ENCODE measurements at regions of chr12 and their contacts with region 1.

Region 1: GRCh38 chr12:53321074-53321814 is at the start of gene AAAS:
- DNase-seq: peak; percentile 84 to 95 (median 91)
- ATAC-seq: peak; percentile 79 to 83 (median 82)
- H3K4me3 ChIP-seq: peak within 1 kb of the TSS; percentile 80 to 95
- H3K4me3 Mint-ChIP-seq: peak within 1 kb of the TSS; percentile 95 to 97 (median 96)
- H3K27ac ChIP-seq: peak within 1 kb of the TSS; percentile 66
- H3K27ac Mint-ChIP-seq: peak within 1 kb of the TSS; percentile 97 to 98
- H3K4me1 ChIP-seq: peaks cover 23 to 52% of the 10 kb centered on the region in 2 experiments
- H3K4me1 Mint-ChIP-seq: peaks cover 40 to 49% (median 42%) of the 10 kb centered on the region in 3 donors
- H3K27me3 ChIP-seq: no peaks in the 10 kb centered on the region
- H3K27me3 Mint-ChIP-seq: no peaks in the 10 kb centered on the region
- total RNA-seq, gene AAAS: 39.3 to 74.6 (median 66.2) TPM

Region 2: GRCh38 chr12:53213348-53213747 is 107.9 kb before region 1 on chr12:
- CTCF ChIA-PET with region 1: interaction called, 5 to 23 read pairs
- POLR2A ChIA-PET with region 1: interaction called in 1 of 2 experiments, 7 read pairs
- DNase-seq: peak; percentile 57 to 91 (median 78)
- ATAC-seq: peak; percentile 65 to 82 (median 67)
- H3K4me3 ChIP-seq: no peak overlapping the region
- H3K4me3 Mint-ChIP-seq: no peak overlapping the region
- H3K27ac ChIP-seq: peak overlapping the region; percentile 20
- H3K27ac Mint-ChIP-seq: peak overlapping the region; percentile 64 to 78
- H3K4me1 ChIP-seq: peaks cover 31 to 87% of the 10 kb centered on the region in 2 experiments
- H3K4me1 Mint-ChIP-seq: peaks cover 78 to 81% (median 79%) of the 10 kb centered on the region in 3 donors
- H3K27me3 ChIP-seq: no peaks in the 10 kb centered on the region
- H3K27me3 Mint-ChIP-seq: no peaks in the 10 kb centered on the region

Region 3: GRCh38 chr12:53344824-53345485 is 23.7 kb after region 1 on chr12:
- CTCF ChIA-PET with region 1: interaction called, 4 to 26 read pairs
- POLR2A ChIA-PET with region 1: no interaction called
- DNase-seq: peak; percentile 27 to 82 (median 56)
- ATAC-seq: peak; percentile 74 to 84 (median 84)
- H3K4me3 ChIP-seq: peak overlapping the region; percentile 55 to 61
- H3K4me3 Mint-ChIP-seq: peak overlapping the region; percentile 91 to 97 (median 91)
- H3K27ac ChIP-seq: peak overlapping the region; percentile 28
- H3K27ac Mint-ChIP-seq: peak overlapping the region; percentile 87 to 92
- H3K4me1 ChIP-seq: peaks cover 6 to 15% of the 10 kb centered on the region in 2 experiments
- H3K4me1 Mint-ChIP-seq: peaks cover 19 to 21% (median 20%) of the 10 kb centered on the region in 3 donors
- H3K27me3 ChIP-seq: peaks cover 0 to 5% of the 10 kb centered on the region in 2 experiments
- H3K27me3 Mint-ChIP-seq: peaks cover 0 to 3% of the 10 kb centered on the region in 2 donors

Region 4: DNA sequence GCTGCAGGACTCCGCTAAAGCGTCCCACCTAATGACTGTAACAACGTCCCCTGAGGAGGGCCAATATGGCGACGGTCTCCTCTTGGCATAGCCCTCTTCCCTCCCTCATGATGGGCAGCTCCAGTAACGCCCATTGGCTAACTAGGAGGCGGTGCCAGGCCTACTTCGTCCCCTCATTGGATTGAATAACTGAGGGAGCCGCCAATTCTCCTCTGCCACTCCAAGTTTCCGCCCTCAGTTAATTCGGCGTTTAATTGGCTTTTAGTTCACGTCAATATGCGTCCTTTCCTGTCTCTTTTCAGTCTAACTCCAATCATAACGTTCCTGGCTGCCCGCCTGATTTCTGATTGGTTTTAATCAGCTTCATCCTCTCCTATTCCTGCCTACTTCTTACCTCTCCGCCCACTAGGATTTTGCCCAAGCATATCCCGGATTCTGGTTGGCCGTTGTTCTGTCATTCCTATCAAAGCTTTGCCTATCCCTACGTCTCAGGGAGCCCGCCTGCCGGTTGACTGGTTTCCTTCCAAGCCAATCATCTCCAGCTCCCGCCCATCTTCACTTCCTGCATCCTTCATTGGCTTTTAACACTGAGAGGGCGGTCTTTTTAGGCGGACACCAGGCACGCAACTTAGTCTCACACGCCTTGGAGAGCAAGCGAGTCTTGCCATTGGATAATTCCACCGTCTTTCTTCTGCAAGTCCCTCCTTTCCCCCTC is 58.3 kb after region 1 on chr12:
- CTCF ChIA-PET with region 1: interaction called, 6 to 31 read pairs
- POLR2A ChIA-PET with region 1: no interaction called
- DNase-seq: peak in 34 of 35 experiments; percentile 76 to 100 (median 98)
- ATAC-seq: peak; percentile 75 to 79 (median 76)
- H3K4me3 ChIP-seq: peak overlapping the region; percentile 51 to 65
- H3K4me3 Mint-ChIP-seq: no peak overlapping the region
- H3K27ac ChIP-seq: peak overlapping the region; percentile 64
- H3K27ac Mint-ChIP-seq: no peak overlapping the region
- H3K4me1 ChIP-seq: peaks cover 31 to 51% of the 10 kb centered on the region in 2 experiments
- H3K4me1 Mint-ChIP-seq: peaks cover 32 to 45% (median 38%) of the 10 kb centered on the region in 3 donors
- H3K27me3 ChIP-seq: no peaks in the 10 kb centered on the region
- H3K27me3 Mint-ChIP-seq: no peaks in the 10 kb centered on the region

Region 5: GRCh38 chr12:53500776-53501614 is 179.8 kb after region 1 on chr12 and contains the start of gene TARBP2:
- CTCF ChIA-PET with region 1: interaction called in 1 of 2 experiments, 10 read pairs
- POLR2A ChIA-PET with region 1: interaction called in 1 of 2 experiments, 3 read pairs
- DNase-seq: peak; percentile 92 to 100 (median 97)
- ATAC-seq: peak; percentile 80 to 82 (median 81)
- H3K4me3 ChIP-seq: peak within 1 kb of the TSS; percentile 80 to 83
- H3K4me3 Mint-ChIP-seq: peak within 1 kb of the TSS; percentile 85 to 97 (median 94)
- H3K27ac ChIP-seq: peak within 1 kb of the TSS; percentile 92
- H3K27ac Mint-ChIP-seq: peak within 1 kb of the TSS; percentile 99
- H3K4me1 ChIP-seq: peaks cover 19 to 34% of the 10 kb centered on the region in 2 experiments
- H3K4me1 Mint-ChIP-seq: peaks cover 40 to 53% (median 41%) of the 10 kb centered on the region in 3 donors
- H3K27me3 ChIP-seq: no peaks in the 10 kb centered on the region
- H3K27me3 Mint-ChIP-seq: no peaks in the 10 kb centered on the region
- total RNA-seq, gene TARBP2: 31.4 to 44.7 (median 39.1) TPM

Region 6: DNA sequence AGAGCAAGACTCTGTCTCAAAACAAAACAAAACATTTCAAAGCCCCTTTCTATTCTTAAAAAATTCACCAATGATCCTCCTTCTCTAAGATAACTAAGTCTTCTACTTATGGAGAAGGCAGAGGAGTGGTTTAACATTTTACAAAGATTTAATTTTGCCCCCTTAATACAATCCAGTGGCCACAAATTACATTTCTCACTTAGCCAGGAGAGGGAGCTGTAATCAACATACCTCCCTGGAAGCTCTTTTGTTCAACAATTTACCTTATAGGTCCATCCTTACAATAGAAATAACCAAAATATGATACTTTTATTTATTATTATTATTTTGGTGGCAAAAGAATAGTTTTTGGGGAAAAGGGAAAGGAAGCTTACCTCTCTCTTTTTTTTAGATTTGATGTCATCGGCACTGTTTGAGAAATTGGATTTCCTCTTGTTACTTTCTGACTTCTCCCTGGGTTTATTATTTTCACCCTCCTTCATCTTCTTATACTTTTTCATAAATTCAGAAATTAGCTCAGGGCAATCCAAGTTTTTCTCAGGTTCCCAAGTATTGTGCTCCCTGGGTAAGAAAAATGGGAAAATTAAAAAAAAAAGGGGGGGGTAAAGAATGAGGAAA is 930.5 kb after region 1 on chr12:
- CTCF ChIA-PET with region 1: no interaction called
- POLR2A ChIA-PET with region 1: no interaction called
- DNase-seq: peak in 7 of 35 experiments; percentile 4 to 70 (median 17)
- ATAC-seq: peak; percentile 55 to 70 (median 60)
- H3K4me3 ChIP-seq: no peak overlapping the region
- H3K4me3 Mint-ChIP-seq: no peak overlapping the region
- H3K27ac ChIP-seq: no peak overlapping the region
- H3K27ac Mint-ChIP-seq: no peak overlapping the region
- H3K4me1 ChIP-seq: peaks cover 0 to 5% of the 10 kb centered on the region in 2 experiments
- H3K4me1 Mint-ChIP-seq: peaks cover 5 to 10% (median 7%) of the 10 kb centered on the region in 3 donors
- H3K27me3 ChIP-seq: no peaks in the 10 kb centered on the region
- H3K27me3 Mint-ChIP-seq: no peaks in the 10 kb centered on the region

Region 7: DNA sequence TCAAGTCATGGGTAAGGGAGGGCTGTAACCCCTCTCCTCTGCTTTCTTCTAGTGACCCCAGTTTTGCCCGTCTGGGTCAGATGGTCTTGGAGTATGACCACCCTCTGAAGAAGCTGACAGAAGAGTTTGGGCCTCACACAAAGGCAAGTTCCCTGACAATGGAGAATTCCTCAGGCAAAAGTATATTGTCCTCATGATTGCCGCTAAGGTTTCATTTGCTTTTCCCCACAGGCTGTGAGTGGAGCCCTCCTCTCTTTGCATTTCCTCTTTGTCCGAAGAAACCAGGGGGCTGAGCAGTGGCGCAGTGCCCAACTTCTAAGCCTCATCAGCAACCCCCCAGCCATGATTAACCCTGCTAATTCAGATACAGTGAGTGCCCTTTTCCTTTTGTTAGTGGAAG is 1188.4 kb after region 1 on chr12:
- CTCF ChIA-PET with region 1: no interaction called
- POLR2A ChIA-PET with region 1: interaction called in 1 of 2 experiments, 13 read pairs
- DNase-seq: no peak
- ATAC-seq: no peak
- H3K4me3 ChIP-seq: no peak overlapping the region
- H3K4me3 Mint-ChIP-seq: no peak overlapping the region
- H3K27ac ChIP-seq: no peak overlapping the region
- H3K27ac Mint-ChIP-seq: no peak overlapping the region
- H3K4me1 ChIP-seq: no peaks in the 10 kb centered on the region
- H3K4me1 Mint-ChIP-seq: peaks cover 12 to 22% (median 18%) of the 10 kb centered on the region in 3 donors
- H3K27me3 ChIP-seq: no peaks in the 10 kb centered on the region
- H3K27me3 Mint-ChIP-seq: no peaks in the 10 kb centered on the region